A673 (cell line): ENCODE measurements at regions of chr10 and their contacts with region 1.

Region 1: DNA sequence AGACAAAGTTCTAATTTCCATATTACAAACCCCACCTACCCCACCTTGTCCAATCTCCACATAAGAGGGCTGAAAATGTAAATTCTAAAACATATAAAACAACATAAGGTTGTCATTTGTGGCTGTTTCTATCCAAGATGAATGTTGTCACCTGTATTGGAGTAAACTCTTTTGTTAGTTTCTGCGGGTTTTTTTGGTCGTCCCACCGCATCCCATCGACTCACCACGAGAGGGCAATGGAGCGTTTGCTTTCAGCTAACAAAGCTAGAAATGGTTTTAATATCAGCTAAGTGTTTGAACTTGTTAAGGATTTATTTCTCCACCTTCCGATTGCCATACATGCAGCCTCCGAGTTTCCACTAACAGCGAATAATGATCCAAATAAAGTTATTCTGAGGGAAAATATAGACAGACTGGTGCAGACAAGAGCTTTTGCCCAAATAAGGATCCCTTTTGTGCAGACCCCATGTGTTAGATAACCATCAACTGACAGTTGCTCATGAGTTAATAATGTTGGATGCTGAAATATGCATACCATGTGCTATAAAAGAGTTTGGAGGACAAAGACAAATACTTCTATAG is 137.2 kb downstream of the ARID5B start:
- DNase-seq: peak; percentile 93
- H3K4me3 ChIP-seq: peak overlapping the region; percentile 5
- H3K27ac ChIP-seq: peak overlapping the region; percentile 79
- H3K4me1 ChIP-seq: peaks cover 85% of the 10 kb centered on the region
- H3K27me3 ChIP-seq: no peaks in the 10 kb centered on the region
- CTCF ChIP-seq: peak; percentile 94

Region 2: GRCh38 chr10:61961278-61961677 is 77.4 kb before region 1 on chr10:
- CTCF ChIA-PET with region 1: no interaction called
- POLR2A ChIA-PET with region 1: no interaction called
- intact Hi-C with region 1: no loop called
- DNase-seq: no peak
- H3K4me3 ChIP-seq: no peak overlapping the region
- H3K27ac ChIP-seq: no peak overlapping the region
- H3K4me1 ChIP-seq: peaks cover 3% of the 10 kb centered on the region
- H3K27me3 ChIP-seq: no peaks in the 10 kb centered on the region
- CTCF ChIP-seq: no peak

Region 3: GRCh38 chr10:61992671-61993668 is 45.7 kb before region 1 on chr10:
- CTCF ChIA-PET with region 1: interaction called, 7 read pairs
- POLR2A ChIA-PET with region 1: no interaction called
- intact Hi-C with region 1: loop called (anchors 2 kb)
- DNase-seq: peak; percentile 94
- H3K4me3 ChIP-seq: peak overlapping the region; percentile 40
- H3K27ac ChIP-seq: peak overlapping the region; percentile 84
- H3K4me1 ChIP-seq: peaks cover 54% of the 10 kb centered on the region
- H3K27me3 ChIP-seq: no peaks in the 10 kb centered on the region
- CTCF ChIP-seq: no peak

Region 4: DNA sequence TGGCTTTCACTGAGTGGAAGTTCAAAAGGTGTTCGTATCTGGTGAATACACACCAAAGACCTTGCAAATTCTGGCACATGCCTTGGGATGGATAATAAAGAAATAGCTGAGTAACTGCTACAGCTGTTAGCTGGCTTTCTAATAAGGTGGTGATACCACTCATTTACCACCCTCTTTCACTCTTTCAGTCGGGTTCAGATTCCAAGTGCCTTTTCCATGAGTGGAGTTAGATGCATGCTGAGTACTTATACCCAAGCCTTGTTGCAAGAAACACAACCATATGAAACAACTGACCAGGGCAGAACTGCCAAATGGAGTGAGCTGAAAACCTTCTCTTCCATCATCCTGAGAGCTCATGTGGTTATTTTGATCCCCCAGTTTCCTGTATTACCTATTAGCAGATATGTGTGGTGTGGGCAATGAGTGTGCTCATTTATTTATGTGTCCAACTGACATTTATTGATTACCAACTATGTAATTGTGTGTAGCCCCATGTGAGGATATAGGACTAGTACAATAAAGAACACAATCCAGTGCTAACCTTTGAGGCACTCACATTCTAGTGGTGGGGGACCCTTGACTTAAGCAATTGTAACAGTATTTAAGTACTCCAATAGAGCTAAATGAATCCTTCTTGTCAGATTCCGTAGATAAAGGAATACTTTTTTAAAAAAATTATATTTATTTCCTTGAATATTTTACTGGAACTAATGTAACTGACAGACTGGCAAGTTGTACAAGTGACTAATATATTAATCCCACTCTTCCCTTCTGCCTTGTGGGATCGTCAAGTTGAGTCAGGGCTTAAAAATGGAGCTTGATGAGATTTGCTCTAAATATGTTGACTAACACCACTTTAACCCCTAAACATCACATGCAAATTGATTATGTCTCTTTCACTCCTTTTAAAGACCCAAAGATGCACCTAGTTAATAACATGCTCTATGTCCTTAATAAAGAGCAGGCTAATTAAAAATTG is 12.5 kb before region 1 on chr10:
- CTCF ChIA-PET with region 1: interaction called, 10 read pairs
- POLR2A ChIA-PET with region 1: no interaction called
- intact Hi-C with region 1: no loop called
- DNase-seq: no peak
- H3K4me3 ChIP-seq: no peak overlapping the region
- H3K27ac ChIP-seq: no peak overlapping the region
- H3K4me1 ChIP-seq: peaks cover 18% of the 10 kb centered on the region
- H3K27me3 ChIP-seq: no peaks in the 10 kb centered on the region
- CTCF ChIP-seq: no peak

Region 5: GRCh38 chr10:62244780-62245467 is 206.2 kb after region 1 on chr10:
- CTCF ChIA-PET with region 1: interaction called, 27 read pairs
- POLR2A ChIA-PET with region 1: interaction called, 5 read pairs
- intact Hi-C with region 1: loop called (anchors 1 kb)
- DNase-seq: peak; percentile 91
- H3K4me3 ChIP-seq: peak overlapping the region; percentile 29
- H3K27ac ChIP-seq: peak overlapping the region; percentile 68
- H3K4me1 ChIP-seq: peaks cover 78% of the 10 kb centered on the region
- H3K27me3 ChIP-seq: no peaks in the 10 kb centered on the region
- CTCF ChIP-seq: peak; percentile 93